Common myeloid progenitor, CD34-positive (primary cell): ENCODE measurements at regions of chr20 and their contacts with region 1.

Region 1: GRCh38 chr20:45823949-45824835 is 2.9 kb downstream of the TNNC2 start:
- DNase-seq: peak; percentile 59 to 72 (median 71)
- H3K4me3 ChIP-seq: peak overlapping the region in 3 of 7 experiments; percentile 28 to 66 (median 57)
- H3K27ac ChIP-seq: no peak overlapping the region
- H3K4me1 ChIP-seq: peaks cover 0 to 29% (median 16%) of the 10 kb centered on the region in 4 experiments
- H3K27me3 ChIP-seq: peaks cover 0 to 18% (median 5%) of the 10 kb centered on the region in 5 experiments

Region 2: DNA sequence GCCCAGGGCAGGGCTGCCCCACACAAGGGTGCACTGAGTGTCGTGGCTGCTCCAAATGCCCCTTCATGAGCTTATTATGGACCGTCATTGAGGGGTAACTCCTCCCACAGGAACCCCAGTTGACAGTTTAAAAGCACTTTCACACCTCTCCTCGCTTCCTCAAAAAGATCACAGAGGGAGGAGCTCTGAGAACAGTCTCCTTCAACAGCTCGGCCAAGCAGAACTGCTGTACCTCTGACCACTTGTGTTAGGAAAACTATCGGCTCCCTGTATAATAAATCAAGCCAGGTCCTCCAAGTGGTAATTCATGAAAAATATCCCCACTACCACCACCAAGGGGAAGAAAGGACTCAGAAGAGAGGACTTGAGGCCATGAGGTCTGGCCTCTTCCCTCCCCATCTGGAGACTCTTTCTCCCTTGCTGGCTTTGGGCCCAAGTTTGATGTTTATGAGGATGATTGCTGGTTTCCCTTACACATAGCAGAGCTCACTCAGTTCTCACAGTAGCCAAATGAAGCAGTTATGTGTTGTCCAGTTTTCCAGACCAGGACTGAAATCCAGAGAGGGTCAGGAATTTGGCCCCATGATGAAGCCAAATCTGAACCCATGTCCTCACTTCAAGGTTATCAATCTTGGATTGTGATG is 18.1 kb after region 1 on chr20:
- CTCF ChIA-PET with region 1: interaction called, 24 read pairs
- POLR2A ChIA-PET with region 1: no interaction called
- DNase-seq: peak; percentile 32 to 86 (median 81)
- H3K4me3 ChIP-seq: no peak overlapping the region
- H3K27ac ChIP-seq: peak overlapping the region; percentile 37 to 54
- H3K4me1 ChIP-seq: peaks cover 3 to 15% (median 10%) of the 10 kb centered on the region in 4 experiments
- H3K27me3 ChIP-seq: no peaks in the 10 kb centered on the region